B cell (primary cell): ENCODE measurements at regions of chr10 and their contacts with region 1.

Region 1: GRCh38 chr10:91088300-91089140 is 131.9 kb upstream of the PCGF5 start:
- DNase-seq: peak; percentile 57
- ATAC-seq: peak; percentile 79
- H3K4me3 ChIP-seq: no peak overlapping the region
- H3K4me3 Mint-ChIP-seq: no peak overlapping the region
- H3K27ac ChIP-seq: no peak overlapping the region
- H3K27ac Mint-ChIP-seq: no peak overlapping the region
- H3K4me1 ChIP-seq: no peaks in the 10 kb centered on the region
- H3K4me1 Mint-ChIP-seq: peaks cover 3% of the 10 kb centered on the region
- H3K27me3 ChIP-seq: no peaks in the 10 kb centered on the region
- H3K27me3 Mint-ChIP-seq: no peaks in the 10 kb centered on the region
- CTCF ChIP-seq: peak; percentile 48

Region 2: DNA sequence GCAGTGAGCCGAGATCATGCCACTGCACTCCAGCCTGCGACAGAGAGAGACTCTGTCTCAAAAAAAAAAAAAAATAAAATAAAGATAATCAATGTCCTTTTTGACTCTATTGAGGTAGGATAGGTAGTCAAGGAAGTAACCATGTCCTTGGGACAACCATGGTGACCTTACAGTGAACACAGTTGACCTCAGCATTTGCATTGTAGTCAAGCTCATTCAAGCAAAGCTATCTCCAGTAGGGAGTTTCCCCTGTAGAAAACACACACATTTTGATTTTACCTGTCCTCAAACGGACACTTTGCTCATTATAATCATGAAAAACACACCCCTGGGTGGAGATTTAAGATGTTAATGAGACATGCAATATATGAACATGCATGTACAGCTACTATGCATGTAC is 1215.5 kb before region 1 on chr10:
- CTCF ChIA-PET with region 1: no interaction called
- POLR2A ChIA-PET with region 1: no interaction called
- intact Hi-C with region 1: no loop called
- DNase-seq: peak; percentile 67
- ATAC-seq: peak; percentile 73
- H3K4me3 ChIP-seq: no peak overlapping the region
- H3K4me3 Mint-ChIP-seq: peak overlapping the region; percentile 48
- H3K27ac ChIP-seq: no peak overlapping the region
- H3K27ac Mint-ChIP-seq: peak overlapping the region; percentile 1
- H3K4me1 ChIP-seq: peaks cover 17% of the 10 kb centered on the region in 2 donors
- H3K4me1 Mint-ChIP-seq: peaks cover 22% of the 10 kb centered on the region
- H3K27me3 ChIP-seq: no peaks in the 10 kb centered on the region
- H3K27me3 Mint-ChIP-seq: peaks cover 6% of the 10 kb centered on the region
- CTCF ChIP-seq: no peak

Region 3: DNA sequence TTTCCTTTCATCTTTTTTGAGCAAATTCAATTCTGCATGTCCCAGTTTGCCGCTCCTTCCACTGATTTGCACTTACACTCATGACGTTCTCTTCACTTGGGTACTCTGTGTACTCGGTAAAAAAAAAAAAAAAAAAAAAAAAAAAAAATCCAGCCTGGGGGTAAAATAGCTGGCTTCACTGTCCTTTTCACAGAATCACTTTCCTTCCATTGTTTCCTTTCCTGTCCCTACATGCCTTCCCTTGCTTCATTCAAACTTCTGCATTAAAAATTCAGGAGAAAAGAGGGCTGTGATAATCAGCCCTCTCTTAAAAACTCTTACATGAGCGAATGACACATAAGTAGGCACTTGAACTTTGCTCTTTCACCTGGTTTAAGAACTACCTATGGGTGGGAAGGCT is 176.3 kb before region 1 on chr10:
- CTCF ChIA-PET with region 1: interaction called, 18 read pairs
- POLR2A ChIA-PET with region 1: no interaction called
- intact Hi-C with region 1: loop called (anchors 2 kb)
- DNase-seq: no peak
- ATAC-seq: no peak
- H3K4me3 ChIP-seq: no peak overlapping the region
- H3K4me3 Mint-ChIP-seq: no peak overlapping the region
- H3K27ac ChIP-seq: no peak overlapping the region
- H3K27ac Mint-ChIP-seq: no peak overlapping the region
- H3K4me1 ChIP-seq: no peaks in the 10 kb centered on the region
- H3K4me1 Mint-ChIP-seq: peaks cover 2% of the 10 kb centered on the region
- H3K27me3 ChIP-seq: no peaks in the 10 kb centered on the region
- H3K27me3 Mint-ChIP-seq: no peaks in the 10 kb centered on the region
- CTCF ChIP-seq: no peak

Region 4: DNA sequence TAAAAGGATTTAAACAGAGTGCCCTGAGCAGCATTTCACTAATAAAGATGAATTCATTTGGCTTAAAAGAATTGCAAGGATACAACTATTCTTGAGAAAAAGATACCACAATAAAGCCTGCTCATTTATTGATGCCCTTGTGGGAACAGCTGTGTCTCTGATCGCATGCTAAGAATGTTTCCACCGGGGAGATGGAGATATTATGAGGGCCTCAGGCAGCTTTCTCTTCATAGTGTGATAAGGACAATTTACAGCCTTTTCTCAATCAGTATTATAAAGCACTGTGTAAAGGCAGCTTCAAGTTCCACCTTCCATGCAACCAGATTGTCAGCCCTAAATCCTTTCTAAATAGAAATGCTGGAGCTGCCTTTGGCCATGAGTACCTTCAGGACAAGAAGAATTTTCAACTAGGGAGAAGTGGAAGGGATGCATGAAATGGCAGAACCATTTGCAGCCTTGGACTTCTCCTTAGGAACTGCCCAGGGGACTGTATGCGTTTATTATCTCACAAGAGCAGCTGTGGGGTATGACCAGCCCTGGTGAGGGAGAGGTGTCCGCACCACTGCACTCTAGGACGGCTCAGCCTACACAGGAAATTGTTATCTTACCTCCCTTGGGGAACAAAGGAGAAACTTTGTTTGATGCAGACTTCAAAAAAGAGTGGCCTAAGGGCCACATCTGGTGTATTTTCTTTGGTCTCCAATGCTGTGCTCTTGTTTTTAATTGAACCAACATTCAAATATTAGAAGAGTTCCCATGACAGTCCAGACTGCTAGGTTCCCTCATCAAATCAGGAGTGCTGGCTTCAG is 15.1 kb after region 1 on chr10:
- CTCF ChIA-PET with region 1: interaction called, 15 read pairs
- POLR2A ChIA-PET with region 1: no interaction called
- intact Hi-C with region 1: no loop called
- DNase-seq: peak; percentile 31
- ATAC-seq: peak; percentile 84
- H3K4me3 ChIP-seq: peak overlapping the region in 1 of 5 experiments; percentile 16
- H3K4me3 Mint-ChIP-seq: peak overlapping the region; percentile 70
- H3K27ac ChIP-seq: peak overlapping the region in 1 of 2 donors; percentile 43
- H3K27ac Mint-ChIP-seq: peak overlapping the region; percentile 76
- H3K4me1 ChIP-seq: peaks cover 22 to 28% of the 10 kb centered on the region in 2 donors
- H3K4me1 Mint-ChIP-seq: peaks cover 35% of the 10 kb centered on the region
- H3K27me3 ChIP-seq: no peaks in the 10 kb centered on the region
- H3K27me3 Mint-ChIP-seq: no peaks in the 10 kb centered on the region
- CTCF ChIP-seq: no peak